ENCODE measurements at regions of chr20 and their contacts with region 1.

Region 1: DNA sequence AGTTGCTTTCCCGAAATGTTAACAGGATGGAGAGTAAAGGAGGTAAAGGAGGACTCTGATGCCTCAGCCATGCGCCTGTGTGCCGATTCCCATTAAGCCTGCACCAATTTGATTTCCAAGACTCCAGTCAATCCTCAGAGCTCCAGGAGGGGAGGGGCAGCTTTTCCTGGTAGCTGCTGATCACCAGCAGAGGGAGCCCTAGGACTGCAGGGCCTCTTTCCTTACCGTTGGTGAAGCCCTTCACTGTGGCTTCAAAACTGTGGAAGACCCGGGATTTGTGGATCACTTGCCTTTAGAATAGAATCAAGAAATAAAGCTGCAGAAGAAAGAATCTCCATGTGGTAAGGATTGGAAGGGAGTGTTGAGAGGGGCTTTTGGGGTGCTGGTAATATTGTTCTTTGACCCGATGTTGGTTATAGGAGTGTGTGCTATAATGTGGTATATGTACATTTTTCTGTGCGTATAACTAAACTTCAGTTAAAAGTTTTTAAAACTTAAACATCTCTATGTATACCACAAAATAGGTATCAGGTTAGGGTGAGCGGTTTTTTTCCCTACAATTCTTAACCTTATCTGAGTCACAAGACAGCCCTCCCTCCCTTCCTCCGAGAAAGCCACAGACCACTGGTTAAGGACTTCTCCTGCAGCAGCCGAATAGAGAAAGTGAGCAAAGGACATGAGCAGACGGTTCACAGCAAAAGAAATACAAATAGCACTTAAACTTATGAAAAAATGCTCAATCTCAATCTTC is 6.9 kb upstream of the OSER1 start:
- DNase-seq: peak; percentile 92 to 95
- H3K4me3 ChIP-seq: no peak overlapping the region
- H3K4me3 Mint-ChIP-seq: no peak overlapping the region
- H3K27ac Mint-ChIP-seq: peak overlapping the region; percentile 8
- H3K4me1 ChIP-seq: peaks cover 49% of the 10 kb centered on the region
- H3K4me1 Mint-ChIP-seq: peaks cover 49% of the 10 kb centered on the region
- H3K27me3 ChIP-seq: no peaks in the 10 kb centered on the region
- H3K27me3 Mint-ChIP-seq: no peaks in the 10 kb centered on the region
- CTCF ChIP-seq: peak; percentile 100

Region 2: DNA sequence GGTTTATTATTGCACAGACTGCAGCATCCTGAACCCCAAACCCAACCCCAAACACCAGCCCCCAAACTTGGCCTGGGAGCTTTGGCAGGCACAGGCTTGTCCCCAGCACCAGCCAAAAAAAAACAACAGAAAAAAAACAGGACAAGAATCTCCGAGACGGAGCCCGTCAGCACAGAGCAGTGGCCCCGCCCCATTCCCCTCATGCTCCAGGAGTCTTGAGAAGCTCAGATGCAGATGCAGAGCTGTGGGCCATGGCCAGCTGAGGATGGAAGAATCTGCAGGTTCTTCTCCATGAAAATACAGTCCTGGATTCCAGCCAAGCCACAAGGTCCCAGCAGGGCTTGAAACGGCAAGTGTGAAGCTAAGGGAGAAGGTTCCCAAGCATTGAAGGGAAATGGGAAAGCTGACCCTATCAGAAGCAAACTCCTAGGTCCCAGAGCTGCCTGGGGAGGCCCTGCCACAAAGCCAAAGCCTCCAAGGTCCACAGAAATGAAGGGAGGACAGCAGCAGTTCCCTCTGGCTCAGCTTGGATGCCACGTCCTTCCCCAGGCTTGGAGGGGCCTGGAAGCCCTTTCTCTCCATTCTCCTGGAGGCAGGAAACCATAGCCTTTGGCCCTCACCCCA is 105.7 kb before region 1 on chr20:
- CTCF ChIA-PET with region 1: interaction called, 14 read pairs
- POLR2A ChIA-PET with region 1: no interaction called
- intact Hi-C with region 1: no loop called
- DNase-seq: peak in 1 of 2 experiments; percentile 47
- H3K4me3 ChIP-seq: no peak overlapping the region
- H3K4me3 Mint-ChIP-seq: no peak overlapping the region
- H3K27ac Mint-ChIP-seq: no peak overlapping the region
- H3K4me1 ChIP-seq: no peaks in the 10 kb centered on the region
- H3K4me1 Mint-ChIP-seq: no peaks in the 10 kb centered on the region
- H3K27me3 ChIP-seq: no peaks in the 10 kb centered on the region
- H3K27me3 Mint-ChIP-seq: peaks cover 2% of the 10 kb centered on the region
- CTCF ChIP-seq: no peak

Region 3: DNA sequence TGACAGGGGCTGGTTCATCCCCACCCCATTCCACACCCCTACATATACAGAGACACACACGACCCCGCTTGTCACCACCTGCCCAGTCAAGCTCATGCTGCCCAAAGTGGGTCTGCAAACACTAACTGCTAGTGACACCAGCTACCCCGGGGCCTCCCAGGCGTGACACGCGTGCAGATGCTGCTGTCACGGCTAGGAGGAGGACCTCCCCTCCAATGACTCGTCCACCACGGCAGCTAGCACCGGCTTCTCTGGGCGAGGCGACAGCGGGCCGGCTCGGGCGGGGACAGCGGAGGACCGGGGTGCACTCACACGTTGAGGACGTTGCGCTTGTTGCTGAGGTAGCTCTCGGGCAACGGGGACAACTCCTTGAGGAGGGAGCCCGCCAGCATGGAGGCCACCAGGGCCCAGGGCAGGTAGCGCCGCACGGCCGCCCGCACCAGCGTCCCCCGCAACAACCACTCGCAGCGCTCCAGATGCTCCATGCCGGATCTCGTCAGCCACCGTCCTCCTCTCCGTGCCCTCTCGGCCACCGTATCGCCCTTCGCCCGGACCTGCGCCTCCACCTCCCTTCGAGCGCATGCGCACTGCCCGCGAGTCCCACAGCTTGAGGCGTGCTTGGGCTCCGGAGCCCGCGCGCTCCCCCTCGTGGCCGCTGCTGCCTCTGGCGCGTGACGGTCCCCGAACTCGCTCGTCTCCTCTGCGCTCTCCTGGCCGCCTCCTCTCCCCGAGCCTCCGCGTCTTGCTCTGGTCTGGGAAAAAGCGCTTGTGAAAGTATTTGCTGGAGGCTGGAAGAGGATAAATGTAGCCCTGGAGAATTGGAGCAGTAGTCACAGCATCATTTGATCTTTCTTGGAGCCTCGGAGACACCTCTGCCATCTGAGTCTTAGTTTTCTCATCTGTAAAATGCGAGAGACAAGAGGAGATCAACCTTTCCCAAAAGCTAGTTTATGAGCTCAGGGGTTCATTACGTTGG is 93.4 kb after region 1 on chr20 and contains the start of gene FITM2:
- CTCF ChIA-PET with region 1: interaction called, 244 read pairs
- POLR2A ChIA-PET with region 1: interaction called, 6 read pairs
- intact Hi-C with region 1: loop called (anchors 1 kb)
- DNase-seq: peak; percentile 100
- H3K4me3 ChIP-seq: peak within 1 kb of the TSS; percentile 77
- H3K4me3 Mint-ChIP-seq: peak within 1 kb of the TSS; percentile 84
- H3K27ac Mint-ChIP-seq: peak within 1 kb of the TSS; percentile 48
- H3K4me1 ChIP-seq: peaks cover 10% of the 10 kb centered on the region
- H3K4me1 Mint-ChIP-seq: peaks cover 13% of the 10 kb centered on the region
- H3K27me3 ChIP-seq: no peaks in the 10 kb centered on the region
- H3K27me3 Mint-ChIP-seq: no peaks in the 10 kb centered on the region
- CTCF ChIP-seq: peak; percentile 100
- total RNA-seq, gene FITM2: 13.9 and 14.4 TPM in 2 replicates

Region 4: DNA sequence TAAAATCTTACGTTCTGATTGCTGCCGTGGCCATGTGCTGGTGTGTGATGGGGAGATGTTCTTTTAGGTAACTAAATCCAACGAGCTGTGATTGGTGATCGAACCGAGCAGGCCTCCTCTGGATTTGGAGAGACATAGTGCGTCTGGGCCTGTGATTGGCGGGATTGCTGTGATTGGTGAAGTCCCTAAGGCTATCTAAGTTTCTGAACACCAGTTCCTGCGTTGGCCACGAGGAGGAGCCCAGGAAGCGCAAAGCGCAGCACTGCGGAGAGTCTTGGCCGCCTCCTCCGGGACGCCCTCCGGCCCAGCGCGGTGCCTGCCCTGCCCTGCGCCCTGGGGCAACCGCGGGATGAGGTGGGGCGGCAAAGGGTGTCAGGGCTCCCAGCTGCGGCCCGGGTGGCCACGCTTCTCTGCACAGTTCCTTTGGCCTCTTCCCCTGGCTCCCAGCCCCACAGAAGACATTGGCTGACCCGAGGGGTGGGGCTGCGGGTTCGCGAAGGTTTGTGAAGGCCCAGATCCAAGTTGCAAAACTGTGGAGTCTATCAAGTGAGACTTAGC is 171.0 kb after region 1 on chr20:
- CTCF ChIA-PET with region 1: interaction called, 110 read pairs
- POLR2A ChIA-PET with region 1: no interaction called
- intact Hi-C with region 1: loop called (anchors 1 kb)
- DNase-seq: peak in 1 of 2 experiments; percentile 75
- H3K4me3 ChIP-seq: no peak overlapping the region
- H3K4me3 Mint-ChIP-seq: no peak overlapping the region
- H3K27ac Mint-ChIP-seq: peak overlapping the region; percentile 18
- H3K4me1 ChIP-seq: peaks cover 60% of the 10 kb centered on the region
- H3K4me1 Mint-ChIP-seq: peaks cover 53% of the 10 kb centered on the region
- H3K27me3 ChIP-seq: no peaks in the 10 kb centered on the region
- H3K27me3 Mint-ChIP-seq: no peaks in the 10 kb centered on the region
- CTCF ChIP-seq: peak; percentile 73 to 78

Region 5: GRCh38 chr20:44460795-44461141 is 243.3 kb after region 1 on chr20:
- CTCF ChIA-PET with region 1: interaction called, 38 read pairs
- POLR2A ChIA-PET with region 1: no interaction called
- intact Hi-C with region 1: loop called (anchors 1 kb)
- DNase-seq: peak in 1 of 2 experiments; percentile 69
- H3K4me3 ChIP-seq: no peak overlapping the region
- H3K4me3 Mint-ChIP-seq: no peak overlapping the region
- H3K27ac Mint-ChIP-seq: no peak overlapping the region
- H3K4me1 ChIP-seq: peaks cover 9% of the 10 kb centered on the region
- H3K4me1 Mint-ChIP-seq: no peaks in the 10 kb centered on the region
- H3K27me3 ChIP-seq: no peaks in the 10 kb centered on the region
- H3K27me3 Mint-ChIP-seq: no peaks in the 10 kb centered on the region
- CTCF ChIP-seq: peak; percentile 73 to 82

Region 6: GRCh38 chr20:44609511-44610312 is 392.2 kb after region 1 on chr20:
- CTCF ChIA-PET with region 1: interaction called, 12 read pairs
- POLR2A ChIA-PET with region 1: no interaction called
- intact Hi-C with region 1: loop called (anchors 1 kb)
- DNase-seq: peak; percentile 97 to 99
- H3K4me3 ChIP-seq: peak overlapping the region; percentile 19
- H3K4me3 Mint-ChIP-seq: peak overlapping the region; percentile 71
- H3K27ac Mint-ChIP-seq: peak overlapping the region; percentile 91
- H3K4me1 ChIP-seq: peaks cover 12% of the 10 kb centered on the region
- H3K4me1 Mint-ChIP-seq: peaks cover 9% of the 10 kb centered on the region
- H3K27me3 ChIP-seq: no peaks in the 10 kb centered on the region
- H3K27me3 Mint-ChIP-seq: no peaks in the 10 kb centered on the region
- CTCF ChIP-seq: peak; percentile 100

Measured in Caco-2 (cell line).